ENCODE measurements at regions of chr3 and their contacts with region 1.

Region 1: DNA sequence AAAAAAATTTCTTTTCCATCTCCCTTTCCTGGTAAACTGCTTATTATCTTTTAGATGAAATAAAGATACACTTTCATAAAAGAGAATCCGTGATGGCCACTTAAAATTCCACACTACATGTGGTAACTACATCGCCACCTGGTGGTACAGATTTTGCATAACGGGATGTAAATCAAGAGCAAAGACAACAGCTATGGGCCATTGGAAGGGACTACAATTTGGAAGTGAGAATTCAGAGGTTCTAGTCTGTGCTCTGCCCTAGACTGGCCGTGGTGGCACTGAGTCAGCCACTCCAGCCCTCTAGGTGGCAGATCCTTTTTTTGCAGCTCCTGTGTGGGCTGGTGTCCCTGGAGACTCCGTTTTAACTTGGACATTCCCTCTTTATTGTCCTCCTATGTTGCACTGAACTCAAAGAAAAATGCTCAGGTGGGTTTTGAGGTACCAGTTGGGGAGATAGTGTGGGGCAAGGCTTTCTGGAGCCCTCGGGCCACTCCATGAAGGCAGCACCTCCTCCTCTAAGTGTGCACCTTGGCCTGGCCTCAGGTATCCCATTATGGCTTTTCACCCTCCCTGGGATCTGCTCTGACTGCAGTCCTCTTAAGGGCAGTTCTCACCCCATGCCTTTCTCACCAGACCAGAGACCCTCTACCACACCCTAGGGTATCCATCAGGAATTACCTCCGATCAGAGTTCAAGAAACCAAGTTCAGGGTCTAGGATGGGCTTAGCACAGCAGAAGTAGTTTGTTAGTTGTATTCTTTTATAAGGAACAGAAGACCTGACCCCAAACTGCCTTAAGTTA is 54.9 kb downstream of the SPSB4 start:
- DNase-seq: peak; percentile 76
- H3K4me3 ChIP-seq: no peak overlapping the region; a peak in 1 of 4 replicates
- H3K27ac ChIP-seq: no peak overlapping the region
- H3K4me1 ChIP-seq: peaks cover 0 to 21% of the 10 kb centered on the region in 2 experiments; a peak in 1 of 4 replicates
- H3K27me3 ChIP-seq: no peaks in the 10 kb centered on the region
- CTCF ChIP-seq: peak; percentile 81
- EP300 ChIP-seq: no peak
- RAD21 ChIP-seq: peak; percentile 87

Region 2: GRCh38 chr3:141006344-141006743 is 99.7 kb before region 1 on chr3:
- CTCF ChIA-PET with region 1: interaction called, 78 read pairs
- POLR2A ChIA-PET with region 1: no interaction called
- DNase-seq: no peak
- H3K4me3 ChIP-seq: no peak overlapping the region
- H3K27ac ChIP-seq: no peak overlapping the region
- H3K4me1 ChIP-seq: no peaks in the 10 kb centered on the region
- H3K27me3 ChIP-seq: no peaks in the 10 kb centered on the region
- CTCF ChIP-seq: no peak
- EP300 ChIP-seq: no peak
- RAD21 ChIP-seq: no peak

Region 3: GRCh38 chr3:141044695-141045641 is 61.1 kb before region 1 on chr3:
- CTCF ChIA-PET with region 1: interaction called, 77 read pairs
- POLR2A ChIA-PET with region 1: no interaction called
- DNase-seq: no peak
- H3K4me3 ChIP-seq: no peak overlapping the region
- H3K27ac ChIP-seq: no peak overlapping the region
- H3K4me1 ChIP-seq: no peaks in the 10 kb centered on the region
- H3K27me3 ChIP-seq: peaks cover 6% of the 10 kb centered on the region; the same call in 1 of the 2 replicates
- CTCF ChIP-seq: no peak
- EP300 ChIP-seq: no peak
- RAD21 ChIP-seq: no peak

Region 4: DNA sequence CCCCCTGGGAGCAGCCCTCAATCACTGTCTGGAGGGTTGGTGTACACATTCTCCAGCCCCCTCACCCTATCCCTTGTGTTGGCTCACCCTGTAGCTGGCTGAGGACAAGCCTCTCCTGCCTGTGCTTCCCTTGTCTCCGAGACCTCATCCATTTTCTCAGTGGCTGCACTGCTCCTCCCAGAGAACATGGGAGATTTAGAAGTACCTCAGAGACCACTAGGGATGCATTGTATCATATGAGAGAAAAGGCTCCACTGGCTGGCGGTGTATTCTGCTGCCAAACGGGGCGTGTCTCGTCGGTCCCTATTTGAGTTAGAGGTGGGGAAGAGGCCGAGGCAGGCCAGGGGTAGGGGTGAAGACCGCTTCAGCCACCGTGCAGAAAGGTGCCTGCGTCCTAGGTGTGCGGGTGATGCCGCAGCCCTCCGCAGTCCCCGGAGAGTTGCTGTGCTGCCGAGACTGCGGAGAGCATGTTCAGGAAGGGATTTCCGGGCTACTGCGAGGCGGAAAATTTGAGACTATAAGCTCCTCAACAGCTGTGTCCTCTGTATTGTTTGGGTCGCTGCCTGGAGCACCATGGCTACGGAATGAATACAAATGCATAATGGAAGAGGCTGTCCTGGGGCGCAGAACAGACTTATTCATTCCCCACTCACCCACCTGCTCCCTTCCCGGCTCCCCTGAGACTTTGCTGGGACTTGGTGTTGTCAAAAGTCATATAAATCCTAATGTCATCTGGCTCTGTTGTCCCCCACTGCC is 11.1 kb before region 1 on chr3:
- CTCF ChIA-PET with region 1: interaction called, 49 read pairs
- POLR2A ChIA-PET with region 1: no interaction called
- DNase-seq: no peak
- H3K4me3 ChIP-seq: no peak overlapping the region
- H3K27ac ChIP-seq: no peak overlapping the region
- H3K4me1 ChIP-seq: peaks cover 0 to 49% of the 10 kb centered on the region in 2 experiments; a peak in 3 of 4 replicates
- H3K27me3 ChIP-seq: no peaks in the 10 kb centered on the region
- CTCF ChIP-seq: no peak
- EP300 ChIP-seq: no peak
- RAD21 ChIP-seq: no peak

Region 5: DNA sequence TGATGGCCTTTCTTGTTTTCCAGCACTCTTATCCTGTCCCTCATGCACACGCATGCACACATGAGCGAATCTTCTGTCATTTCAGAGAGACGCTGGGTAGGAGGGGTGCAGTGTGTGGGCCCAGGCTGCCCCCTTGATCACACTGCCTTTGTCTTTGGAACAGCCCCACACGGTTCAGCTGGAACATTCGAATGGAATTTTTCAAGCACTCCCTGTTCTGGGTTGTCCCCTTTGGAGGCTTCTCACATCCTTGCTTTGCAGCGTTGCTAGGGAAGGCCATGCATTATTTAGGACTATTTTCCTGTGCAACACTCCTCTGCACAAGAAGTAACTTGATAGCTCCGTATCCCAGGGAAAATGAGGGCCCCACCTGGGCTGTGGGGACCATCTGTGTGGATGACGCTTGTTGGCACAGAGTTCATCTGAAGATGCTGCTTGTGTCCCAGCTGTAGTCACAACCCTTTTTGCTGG is 23.5 kb after region 1 on chr3:
- CTCF ChIA-PET with region 1: interaction called, 16 read pairs
- POLR2A ChIA-PET with region 1: no interaction called
- DNase-seq: no peak
- H3K4me3 ChIP-seq: no peak overlapping the region
- H3K27ac ChIP-seq: no peak overlapping the region
- H3K4me1 ChIP-seq: peaks cover 0 to 18% of the 10 kb centered on the region in 2 experiments; a peak in 1 of 4 replicates
- H3K27me3 ChIP-seq: no peaks in the 10 kb centered on the region
- CTCF ChIP-seq: no peak
- EP300 ChIP-seq: no peak
- RAD21 ChIP-seq: no peak